ENCODE measurements at regions of chr5 and their contacts with region 1.

Region 1: DNA sequence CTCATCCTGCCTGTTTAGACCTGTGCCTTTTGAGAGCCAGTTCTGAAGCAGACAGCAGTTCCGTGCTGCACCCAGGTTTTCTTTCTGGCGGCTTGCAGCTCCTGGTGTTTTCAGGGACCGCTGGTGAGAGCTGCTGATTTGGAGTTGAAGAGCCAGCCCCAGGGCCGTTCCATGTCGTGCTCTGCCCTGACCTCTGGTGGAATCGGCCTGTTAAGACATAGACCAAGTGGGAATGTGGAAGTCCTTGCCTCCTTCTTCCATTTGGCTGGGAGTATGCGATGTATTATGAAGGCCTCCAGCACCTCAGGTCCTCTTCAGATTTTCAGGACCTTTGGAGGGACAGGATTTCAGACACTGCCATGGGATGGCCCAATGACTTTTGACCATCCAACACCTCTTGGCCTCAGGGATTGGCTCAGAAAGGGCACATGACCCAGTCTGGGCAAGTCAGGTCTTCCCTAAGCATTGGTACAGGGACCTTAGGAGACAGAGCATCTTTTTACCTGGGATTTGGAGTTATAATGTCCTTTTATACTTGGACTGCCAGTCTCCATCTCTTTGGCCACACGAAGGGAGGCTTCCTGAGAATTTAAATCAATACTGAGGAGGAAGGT is 136.1 kb upstream of the CLINT1 start:
- DNase-seq: peak; percentile 79 to 86
- H3K4me3 ChIP-seq: no peak overlapping the region
- H3K27ac ChIP-seq: no peak overlapping the region
- H3K4me1 ChIP-seq: no peaks in the 10 kb centered on the region
- H3K27me3 ChIP-seq: no peaks in the 10 kb centered on the region
- CTCF ChIP-seq: peak; percentile 42 to 89 (median 82)
- POLR2A ChIP-seq: no peak

Region 2: DNA sequence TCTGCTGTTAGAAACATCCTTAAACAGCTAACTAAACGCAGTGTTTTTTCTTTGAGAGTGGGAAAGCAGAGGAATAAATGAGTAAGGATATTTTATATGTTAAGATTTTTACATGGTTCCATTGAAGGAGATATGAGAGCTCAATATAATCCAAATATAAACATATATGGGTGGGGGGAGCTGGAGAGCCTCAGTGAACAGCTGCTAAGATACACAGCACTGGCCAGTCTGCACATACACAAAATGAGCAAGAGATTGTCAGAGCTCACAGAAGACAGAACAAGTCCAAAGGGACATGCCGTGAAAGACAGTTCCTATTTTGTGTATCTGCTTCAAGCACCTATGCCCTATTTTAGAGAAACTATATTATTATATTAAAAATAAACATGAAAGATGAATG is 182.9 kb before region 1 on chr5:
- intact Hi-C with region 1: loop called (anchors 5 kb)
- DNase-seq: no peak
- H3K4me3 ChIP-seq: no peak overlapping the region
- H3K27ac ChIP-seq: no peak overlapping the region
- H3K4me1 ChIP-seq: no peaks in the 10 kb centered on the region
- H3K27me3 ChIP-seq: no peaks in the 10 kb centered on the region
- CTCF ChIP-seq: no peak
- POLR2A ChIP-seq: no peak

Region 3: GRCh38 chr5:158648631-158649030 is 653.6 kb after region 1 on chr5:
- intact Hi-C with region 1: no loop called
- DNase-seq: no peak
- H3K4me3 ChIP-seq: no peak overlapping the region
- H3K27ac ChIP-seq: no peak overlapping the region
- H3K4me1 ChIP-seq: no peaks in the 10 kb centered on the region
- H3K27me3 ChIP-seq: no peaks in the 10 kb centered on the region
- CTCF ChIP-seq: no peak
- POLR2A ChIP-seq: no peak

Measured in thyroid gland (tissue), 4 donors.